Cardiac septum (tissue), 1 donor: ENCODE measurements at regions of chr7 and their contacts with region 1.

Region 1: GRCh38 chr7:108002726-108003598 is at the start of gene LAMB1:
- DNase-seq: peak; percentile 88
- total RNA-seq, gene LAMB1: 55.1 TPM

Region 2: DNA sequence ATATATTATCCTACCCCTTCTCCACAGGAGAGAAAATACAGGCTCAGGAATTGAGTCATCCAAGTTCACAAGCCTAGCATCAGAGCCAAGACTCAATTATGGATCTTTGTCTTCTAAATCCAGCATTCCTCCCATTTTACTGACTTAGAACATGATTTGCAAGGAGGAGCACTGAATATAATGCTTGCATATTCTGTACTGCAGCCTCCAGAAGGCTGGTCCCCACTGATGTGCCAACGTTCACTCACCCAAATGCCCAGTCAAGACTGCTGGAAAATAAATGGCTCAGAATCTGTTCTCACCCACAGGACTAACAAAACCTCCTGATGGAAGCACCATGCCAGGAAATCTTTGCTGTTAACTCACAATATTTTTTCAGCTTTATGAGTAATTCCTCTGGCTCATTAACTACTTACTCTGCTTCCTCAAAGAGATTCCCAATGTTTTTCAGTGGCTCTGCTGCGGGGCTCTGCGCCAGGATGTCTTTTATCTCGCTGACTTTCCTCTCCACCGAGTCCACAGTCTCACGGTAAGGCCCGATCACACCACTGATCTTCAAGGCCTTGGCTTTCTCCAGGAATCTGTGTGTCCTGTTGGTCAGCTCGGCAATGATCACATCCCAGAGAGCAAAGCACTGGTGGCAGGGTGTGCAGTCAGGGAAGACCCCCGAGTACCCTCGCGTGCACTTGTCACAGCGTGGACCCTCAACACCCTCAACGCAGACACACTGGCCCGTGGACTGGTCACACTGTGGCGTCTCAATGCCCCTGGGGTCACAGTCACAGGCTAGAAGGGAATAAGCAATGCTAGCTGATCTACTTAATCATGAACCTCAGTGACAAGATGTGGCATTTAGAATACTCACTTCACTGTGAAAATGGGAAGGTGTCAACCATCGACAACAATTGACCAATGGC is 63.1 kb before region 1 on chr7:
- intact Hi-C with region 1: loop called (anchors 5 kb)
- DNase-seq: no peak

Region 3: GRCh38 chr7:108094933-108095710 is 92.2 kb after region 1 on chr7:
- intact Hi-C with region 1: loop called (anchors 5 kb)
- DNase-seq: no peak